ENCODE measurements at regions of chr1 and their contacts with region 1.

Region 1: GRCh38 chr1:5509664-5510452 is 482.4 kb downstream of the NPHP4 start:
- DNase-seq: no peak
- H3K4me3 ChIP-seq: no peak overlapping the region
- CTCF ChIP-seq: peak; percentile 94

Region 2: DNA sequence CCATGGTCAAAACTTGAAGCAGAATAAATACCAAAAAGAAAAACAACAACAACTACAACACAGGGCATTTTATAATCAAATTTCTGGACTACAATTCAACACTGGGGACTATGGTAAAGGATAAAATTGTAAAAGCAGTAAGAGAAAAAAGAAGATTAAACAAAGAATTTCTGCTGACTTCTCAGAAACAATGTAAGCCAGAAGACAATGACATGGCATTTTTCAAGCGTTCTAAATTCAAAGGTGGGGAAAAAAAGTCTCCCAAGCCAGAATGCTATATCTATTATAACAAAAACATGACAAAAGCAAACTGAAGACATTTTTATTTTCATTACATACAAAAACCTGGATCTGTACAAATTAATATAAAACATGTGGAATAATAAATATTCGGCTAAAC is 49.2 kb after region 1 on chr1:
- CTCF ChIA-PET with region 1: no interaction called
- POLR2A ChIA-PET with region 1: no interaction called
- DNase-seq: no peak
- H3K4me3 ChIP-seq: no peak overlapping the region
- CTCF ChIP-seq: no peak

Region 3: GRCh38 chr1:5745776-5746610 is 236.1 kb after region 1 on chr1:
- CTCF ChIA-PET with region 1: interaction called, 11 read pairs
- POLR2A ChIA-PET with region 1: no interaction called
- DNase-seq: peak; percentile 1
- H3K4me3 ChIP-seq: no peak overlapping the region
- CTCF ChIP-seq: peak; percentile 88

Region 4: GRCh38 chr1:5975133-5975880 is 465.4 kb after region 1 on chr1:
- CTCF ChIA-PET with region 1: interaction called, 164 read pairs
- POLR2A ChIA-PET with region 1: no interaction called
- DNase-seq: no peak
- H3K4me3 ChIP-seq: no peak overlapping the region
- CTCF ChIP-seq: peak; percentile 95

Measured in AG04449 (cell line).